ENCODE measurements at regions of chr4 and their contacts with region 1.

Region 1: GRCh38 chr4:37795581-37796195 is 30.8 kb upstream of the PGM2 start:
- DNase-seq: no peak
- H3K4me3 ChIP-seq: no peak overlapping the region
- H3K27ac ChIP-seq: no peak overlapping the region
- H3K4me1 ChIP-seq: no peaks in the 10 kb centered on the region
- H3K27me3 ChIP-seq: no peaks in the 10 kb centered on the region
- CTCF ChIP-seq: no peak
- POLR2A ChIP-seq: no peak

Region 2: DNA sequence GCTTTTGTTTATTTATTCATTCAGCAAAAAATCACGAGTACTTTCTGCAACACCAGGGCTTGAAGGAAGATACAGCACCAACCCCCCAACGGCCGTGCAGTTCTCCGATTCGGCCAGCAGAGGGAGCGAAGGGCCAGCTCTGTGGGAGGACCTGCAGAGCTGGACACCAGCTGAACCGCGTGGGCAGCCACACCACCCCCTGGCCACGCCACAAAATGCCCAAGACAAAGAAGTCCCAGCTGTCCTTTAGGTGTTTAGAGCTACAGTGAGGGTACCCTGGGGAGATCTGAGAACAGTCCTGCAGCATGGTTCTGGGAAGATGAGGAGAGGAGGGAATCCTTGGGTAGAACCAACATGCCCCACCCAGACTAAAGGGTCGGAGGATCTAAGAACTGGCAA is 192.6 kb before region 1 on chr4:
- intact Hi-C with region 1: loop called (anchors 5 kb)
- DNase-seq: peak; percentile 91
- H3K4me3 ChIP-seq: no peak overlapping the region
- H3K27ac ChIP-seq: no peak overlapping the region
- H3K4me1 ChIP-seq: no peaks in the 10 kb centered on the region
- H3K27me3 ChIP-seq: no peaks in the 10 kb centered on the region
- CTCF ChIP-seq: peak; percentile 95 to 99 (median 96)
- POLR2A ChIP-seq: no peak

Region 3: GRCh38 chr4:37953620-37954293 is 158.1 kb after region 1 on chr4:
- intact Hi-C with region 1: no loop called
- DNase-seq: no peak
- H3K4me3 ChIP-seq: no peak overlapping the region
- H3K27ac ChIP-seq: no peak overlapping the region
- H3K4me1 ChIP-seq: no peaks in the 10 kb centered on the region
- H3K27me3 ChIP-seq: no peaks in the 10 kb centered on the region
- CTCF ChIP-seq: no peak
- POLR2A ChIP-seq: no peak

Region 4: GRCh38 chr4:38132107-38132673 is 336.5 kb after region 1 on chr4:
- intact Hi-C with region 1: no loop called
- DNase-seq: peak; percentile 60
- H3K4me3 ChIP-seq: no peak overlapping the region
- H3K27ac ChIP-seq: peak overlapping the region; percentile 2 to 77
- H3K4me1 ChIP-seq: peaks cover 7% of the 10 kb centered on the region
- H3K27me3 ChIP-seq: no peaks in the 10 kb centered on the region
- CTCF ChIP-seq: no peak
- POLR2A ChIP-seq: no peak

Region 5: DNA sequence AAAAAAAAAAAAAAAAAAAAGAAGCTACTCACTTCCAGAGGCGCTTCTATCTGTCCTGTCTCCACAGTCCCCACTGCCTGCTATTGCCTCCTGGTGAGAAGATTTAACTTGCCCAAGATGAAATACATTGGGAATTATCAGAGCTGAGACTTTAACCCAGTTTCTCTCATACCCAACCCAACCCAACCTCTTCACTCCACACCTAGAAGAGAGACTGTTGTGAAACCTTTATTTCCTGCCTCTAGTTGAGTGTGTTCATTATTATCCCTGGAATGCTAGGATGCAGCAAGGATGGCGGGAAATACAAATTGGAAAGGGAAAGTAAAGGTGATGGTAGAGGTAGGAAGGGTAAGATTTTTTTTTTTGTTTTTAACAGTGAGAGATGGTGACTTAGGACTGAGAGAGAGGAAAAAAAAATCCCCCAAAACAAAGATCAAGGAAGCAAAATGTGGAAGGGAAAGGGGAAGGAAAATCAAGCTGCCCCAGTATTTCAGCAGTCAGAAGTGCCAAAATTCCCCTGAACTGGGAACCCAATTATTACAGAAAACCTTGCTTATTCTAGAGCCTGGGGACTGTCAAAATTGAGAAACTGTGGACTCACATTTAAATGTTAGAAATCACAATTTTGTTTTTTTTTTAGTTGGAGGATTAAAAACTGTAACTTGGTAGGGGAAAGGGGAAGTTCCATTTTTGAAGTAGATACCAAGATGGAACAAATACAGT is 417.6 kb after region 1 on chr4:
- intact Hi-C with region 1: no loop called
- DNase-seq: no peak
- H3K4me3 ChIP-seq: no peak overlapping the region
- H3K27ac ChIP-seq: no peak overlapping the region
- H3K4me1 ChIP-seq: peaks cover 3% of the 10 kb centered on the region
- H3K27me3 ChIP-seq: no peaks in the 10 kb centered on the region
- CTCF ChIP-seq: no peak
- POLR2A ChIP-seq: no peak

Measured in testis (tissue), 5 donors.